ENCODE measurements at regions of chr3 and their contacts with region 1.

Region 1: DNA sequence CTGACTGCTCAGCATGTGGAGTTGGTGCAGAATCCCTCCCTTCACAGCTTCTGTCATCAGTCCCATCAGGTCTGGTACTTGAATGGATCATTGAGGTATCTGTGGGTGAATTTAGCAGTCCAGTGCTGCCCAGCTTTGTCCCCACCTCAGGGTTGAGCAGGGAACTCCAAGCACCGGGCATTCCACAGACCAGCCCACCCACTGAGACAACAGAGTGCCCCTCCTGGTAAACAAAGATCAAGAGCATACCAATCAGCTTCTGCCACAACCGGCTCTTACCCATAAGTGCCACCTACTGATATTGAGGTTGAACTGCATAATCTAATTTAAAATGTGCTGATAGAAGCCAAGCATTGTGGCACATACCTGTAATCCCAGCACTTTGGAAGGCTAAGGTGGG is 57.1 kb upstream of the FXR1 start:
- DNase-seq: no peak
- ATAC-seq: peak; percentile 76
- H3K4me3 ChIP-seq: no peak overlapping the region
- H3K27ac ChIP-seq: no peak overlapping the region
- H3K4me1 ChIP-seq: no peaks in the 10 kb centered on the region
- H3K27me3 ChIP-seq: no peaks in the 10 kb centered on the region
- CTCF ChIP-seq: peak; percentile 31 to 34 (median 31); a peak in 4 of 6 replicates
- EP300 ChIP-seq: no peak
- POLR2A ChIP-seq: no peak
- RAD21 ChIP-seq: peak; percentile 44

Region 2: GRCh38 chr3:180633722-180634121 is 221.6 kb before region 1 on chr3:
- CTCF ChIA-PET with region 1: interaction called, 3 read pairs
- POLR2A ChIA-PET with region 1: no interaction called
- RAD21 ChIA-PET with region 1: no interaction called
- SMC1A ChIA-PET with region 1: no interaction called
- in situ Hi-C with region 1: no loop called
- intact Hi-C with region 1: loop called (anchors 1 kb)
- DNase-seq: no peak
- ATAC-seq: peak; percentile 82
- H3K4me3 ChIP-seq: no peak overlapping the region
- H3K27ac ChIP-seq: no peak overlapping the region
- H3K4me1 ChIP-seq: no peaks in the 10 kb centered on the region
- H3K27me3 ChIP-seq: no peaks in the 10 kb centered on the region
- CTCF ChIP-seq: peak; percentile 8 to 21 (median 18); a peak in 2 of 6 replicates
- EP300 ChIP-seq: no peak
- POLR2A ChIP-seq: no peak
- RAD21 ChIP-seq: peak; percentile 39

Measured in GM12878 (cell line).